Stomach (tissue), 19 donors: ENCODE measurements at regions of chr1 and their contacts with region 1.

Region 1: DNA sequence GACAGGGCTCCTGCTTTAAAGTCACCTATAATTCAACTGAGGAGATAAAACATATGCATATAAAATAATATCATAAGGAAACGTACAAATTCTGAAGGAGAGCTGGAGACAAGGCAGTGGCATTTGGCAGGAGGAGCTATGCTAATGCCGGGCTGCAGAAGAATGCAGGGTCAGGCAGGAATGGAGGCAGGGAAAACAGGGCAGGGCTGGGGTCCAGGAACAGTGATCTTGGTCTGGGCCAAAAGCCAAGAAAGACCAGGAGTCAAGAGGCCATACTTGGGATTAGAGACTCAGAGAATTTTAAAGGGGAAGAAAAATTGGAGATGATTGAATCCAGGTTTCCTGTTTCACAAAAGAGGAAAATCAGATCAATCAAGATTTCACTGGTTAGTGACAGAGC is 20.0 kb upstream of the BRDT start:
- DNase-seq: peak in 1 of 2 donors; percentile 36
- H3K4me3 ChIP-seq: no peak overlapping the region
- H3K27ac ChIP-seq: no peak overlapping the region
- H3K4me1 ChIP-seq: peaks cover 0 to 12% (median 2%) of the 10 kb centered on the region in 4 donors
- H3K27me3 ChIP-seq: no peaks in the 10 kb centered on the region
- CTCF ChIP-seq: no peak
- EP300 ChIP-seq: no peak
- POLR2A ChIP-seq: no peak

Region 2: DNA sequence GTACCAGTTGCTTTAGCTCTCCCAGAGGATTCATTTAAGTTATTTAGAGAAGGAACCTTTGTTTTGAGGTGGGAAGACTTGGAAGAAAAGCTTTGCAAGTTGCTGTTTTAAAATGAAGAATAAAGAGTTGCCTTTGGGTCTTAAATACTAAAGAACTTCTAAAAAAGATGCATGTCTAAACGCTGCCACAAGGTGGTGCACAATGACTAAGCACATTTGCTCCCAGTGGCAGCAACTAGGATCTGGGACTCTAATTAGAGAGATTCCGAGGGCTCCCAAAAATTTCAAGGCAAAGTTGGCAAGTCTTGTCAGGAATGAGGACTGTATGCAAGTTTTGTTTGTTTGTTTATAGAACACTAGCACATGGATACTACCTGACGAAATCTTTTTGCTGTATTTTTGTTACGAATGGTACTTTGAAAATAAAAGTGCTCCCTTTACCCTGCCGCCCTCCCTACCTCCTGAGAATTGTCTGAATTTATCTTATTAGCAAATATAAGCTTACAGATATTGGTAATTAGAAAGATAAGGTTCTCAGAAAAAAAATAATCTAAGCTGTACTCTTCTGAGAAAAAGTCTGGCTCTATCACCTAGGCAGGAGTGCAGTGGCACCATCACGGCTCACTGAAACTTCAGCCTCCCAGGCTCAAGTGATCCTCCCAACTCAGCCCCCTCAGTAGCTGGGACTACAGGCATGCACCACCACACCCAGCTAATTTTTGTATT is 646.4 kb before region 1 on chr1:
- intact Hi-C with region 1: loop called (anchors 5 kb)
- DNase-seq: peak; percentile 57 to 88
- H3K4me3 ChIP-seq: peak overlapping the region in 2 of 4 donors; percentile 8 to 27
- H3K27ac ChIP-seq: no peak overlapping the region
- H3K4me1 ChIP-seq: peaks cover 0 to 11% (median 4%) of the 10 kb centered on the region in 4 donors
- H3K27me3 ChIP-seq: no peaks in the 10 kb centered on the region
- CTCF ChIP-seq: peak in 5 of 7 experiments; percentile 47 to 78 (median 68)
- EP300 ChIP-seq: no peak
- POLR2A ChIP-seq: no peak

Region 3: DNA sequence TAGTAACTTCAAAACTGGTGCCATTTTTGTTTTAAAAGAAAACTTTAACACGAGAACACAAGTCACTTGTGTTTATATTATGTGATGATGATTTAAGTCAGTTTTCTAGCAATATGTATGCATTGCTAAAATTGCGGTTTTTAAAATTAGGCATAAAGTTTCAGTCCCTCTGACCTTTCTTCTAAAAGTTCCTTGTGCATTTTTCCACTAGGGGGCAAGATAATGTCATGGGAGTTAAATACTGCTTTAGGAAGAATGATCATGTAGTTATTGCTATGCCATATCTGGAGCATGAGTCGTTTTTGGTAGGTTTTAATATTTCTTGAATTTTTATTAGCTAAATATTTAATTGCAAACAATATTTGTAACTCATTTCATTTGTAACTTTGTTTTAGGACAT is 417.9 kb before region 1 on chr1:
- intact Hi-C with region 1: loop called (anchors 5 kb)
- DNase-seq: peak in 1 of 2 donors; percentile 75
- H3K4me3 ChIP-seq: no peak overlapping the region
- H3K27ac ChIP-seq: no peak overlapping the region
- H3K4me1 ChIP-seq: peaks cover 0 to 10% (median 0%) of the 10 kb centered on the region in 4 donors
- H3K27me3 ChIP-seq: no peaks in the 10 kb centered on the region
- CTCF ChIP-seq: peak in 5 of 7 experiments; percentile 15 to 57 (median 45)
- EP300 ChIP-seq: no peak
- POLR2A ChIP-seq: no peak

Region 4: GRCh38 chr1:92117526-92117925 is 188.3 kb after region 1 on chr1:
- intact Hi-C with region 1: no loop called
- DNase-seq: peak in 1 of 2 donors; percentile 3
- H3K4me3 ChIP-seq: no peak overlapping the region
- H3K27ac ChIP-seq: no peak overlapping the region
- H3K4me1 ChIP-seq: no peaks in the 10 kb centered on the region
- H3K27me3 ChIP-seq: no peaks in the 10 kb centered on the region
- CTCF ChIP-seq: no peak
- EP300 ChIP-seq: no peak
- POLR2A ChIP-seq: no peak